Posterior vena cava (tissue), 2 donors: ENCODE measurements at regions of chr12 and their contacts with region 1.

Region 1: GRCh38 chr12:27014085-27014858 is at the start of gene TM7SF3:
- DNase-seq: peak; percentile 97
- total RNA-seq, gene TM7SF3: 33.4 to 43.5 TPM

Region 2: DNA sequence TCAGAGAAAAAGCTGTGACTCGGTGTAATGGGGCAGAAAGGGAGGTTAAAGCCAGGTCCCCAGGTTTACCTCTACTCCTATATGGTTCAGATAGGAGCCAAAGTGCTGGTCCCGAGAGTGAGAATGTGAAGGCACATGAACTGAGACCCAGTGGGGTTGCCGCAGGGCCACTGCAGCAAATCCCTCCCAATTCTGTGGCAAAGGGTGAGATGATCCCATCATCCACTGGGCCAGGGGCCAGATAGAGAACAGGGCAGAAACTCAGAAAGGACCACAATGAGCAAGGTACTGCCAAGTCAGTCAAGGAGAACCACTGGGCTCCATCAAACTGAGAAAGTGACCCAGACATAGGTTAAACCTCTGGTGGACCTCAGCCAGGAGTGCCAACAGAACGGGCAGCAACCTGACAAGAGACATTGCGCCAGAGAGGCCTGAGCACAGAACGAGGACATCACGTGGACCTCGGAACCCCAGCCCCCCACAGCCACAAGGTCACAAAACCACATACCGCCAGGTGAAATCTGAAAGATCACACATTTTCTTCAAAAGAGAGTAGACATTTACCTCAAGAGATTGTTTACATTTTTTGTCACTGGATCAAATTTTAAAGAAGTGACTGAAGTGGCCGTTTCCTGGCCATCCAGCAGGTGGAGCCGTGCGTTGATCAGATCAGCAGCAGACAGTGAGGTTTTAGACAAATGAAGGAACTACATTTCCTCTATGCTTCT is 160.8 kb before region 1 on chr12:
- intact Hi-C with region 1: loop called in 1 of 2 experiments (anchors 10 kb)
- DNase-seq: peak; percentile 86

Region 3: DNA sequence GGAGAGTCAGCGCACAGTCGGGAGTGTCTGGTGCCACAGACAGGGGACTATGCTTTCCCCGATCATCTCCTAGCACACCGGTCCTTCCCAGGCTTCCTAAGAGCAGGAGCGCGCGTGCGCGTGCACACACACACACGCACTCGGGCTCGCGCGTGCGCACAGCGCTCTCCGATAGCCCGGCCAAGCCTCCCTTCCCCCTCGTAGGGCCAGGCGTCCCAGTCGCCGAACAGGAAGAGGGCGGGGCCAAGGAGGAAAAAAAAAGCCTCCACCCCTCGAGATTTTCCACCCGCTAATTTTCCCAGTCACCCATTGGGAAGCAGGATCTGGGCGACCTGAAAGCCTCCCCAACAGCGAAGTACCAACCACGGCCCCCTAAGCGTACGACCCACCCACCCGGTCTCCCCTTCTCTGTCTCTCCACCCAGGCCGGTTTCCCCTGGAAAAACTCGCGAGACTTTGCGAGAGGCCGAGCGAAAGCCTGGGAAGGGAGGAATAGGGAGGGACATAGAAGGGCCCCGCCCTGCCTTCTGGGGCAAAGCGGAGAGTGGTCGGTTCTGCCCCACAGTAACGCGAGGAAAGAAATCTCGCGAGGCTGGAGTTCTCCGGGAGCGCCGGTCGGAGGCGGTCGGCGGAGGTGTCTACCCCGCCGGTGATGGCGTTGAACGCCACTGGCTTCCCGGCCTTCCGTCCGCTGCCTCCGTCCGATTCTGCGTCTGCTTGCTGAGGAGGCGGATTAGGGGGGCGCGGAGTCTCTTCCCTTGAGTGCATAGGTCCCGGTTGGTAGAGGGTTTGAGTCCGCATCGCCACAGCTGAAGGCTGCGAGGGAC is 76.2 kb before region 1 on chr12 and contains the starts of genes FGFR1OP2 and INTS13:
- intact Hi-C with region 1: loop called in 1 of 2 experiments (anchors 5 kb)
- DNase-seq: peak; percentile 100
- total RNA-seq, gene FGFR1OP2: 46.1 to 48.6 TPM
- total RNA-seq, gene INTS13: 15.1 to 23.0 TPM

Region 4: DNA sequence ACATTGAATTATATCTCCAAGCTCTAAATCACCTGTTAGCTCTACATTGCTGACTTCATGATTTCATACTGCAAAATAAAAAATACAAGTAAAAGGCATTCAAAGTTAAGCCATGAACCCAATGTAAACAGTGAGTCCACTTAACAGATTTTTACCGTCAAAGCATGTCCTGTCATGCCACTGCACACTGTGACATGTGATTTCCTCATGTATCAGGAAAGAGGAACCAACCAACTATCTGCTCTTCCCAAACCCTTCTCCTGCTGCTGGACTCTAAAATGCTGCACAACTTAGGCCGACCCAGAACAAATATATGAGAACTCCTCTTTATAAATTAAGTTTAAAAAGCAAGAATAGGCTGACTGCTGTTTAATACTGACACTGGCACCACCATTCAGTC is 37.6 kb before region 1 on chr12:
- intact Hi-C with region 1: no loop called
- DNase-seq: no peak

Region 5: DNA sequence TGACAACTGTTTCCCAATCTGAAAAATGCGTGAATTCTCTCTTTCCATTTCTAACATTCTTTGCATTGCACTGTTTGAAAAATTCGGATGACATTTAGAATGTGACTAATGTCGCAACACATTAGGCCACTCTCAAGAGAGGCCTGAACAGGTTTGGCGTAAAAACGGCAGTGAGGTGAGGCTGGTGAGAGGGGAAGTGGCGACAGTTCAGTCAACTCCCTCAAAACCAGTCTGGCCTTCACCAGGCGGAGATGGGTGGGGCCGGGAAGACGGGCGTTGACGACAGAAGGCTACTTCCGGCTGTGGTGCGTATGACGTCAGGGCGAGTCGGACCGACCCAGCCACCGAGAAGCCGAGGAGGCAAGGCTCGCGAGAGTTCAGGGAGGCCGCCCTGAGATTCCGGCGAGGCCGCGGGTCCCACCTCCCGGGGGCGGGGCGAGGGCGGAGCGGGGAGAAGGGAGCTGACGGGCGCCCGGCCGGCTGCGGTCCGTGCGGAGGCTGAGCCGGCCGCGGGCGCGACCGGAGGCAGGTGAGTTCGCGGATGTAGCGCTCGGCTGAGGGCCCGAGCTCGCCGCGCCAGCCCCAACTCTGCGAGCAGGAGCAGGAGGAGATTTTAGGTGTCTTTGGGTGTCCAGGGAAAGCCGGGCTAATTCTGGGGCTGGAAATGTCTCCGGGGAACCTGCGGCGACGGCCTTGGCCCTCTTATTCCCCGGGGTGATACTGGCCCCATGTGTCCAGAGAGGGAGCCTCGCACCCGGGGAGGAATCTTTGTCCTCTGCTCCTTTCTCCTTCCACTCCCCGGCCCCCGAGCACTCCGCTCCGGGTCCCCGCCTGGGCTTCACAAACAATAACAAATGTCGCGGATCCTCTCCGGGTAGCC is 229.8 kb after region 1 on chr12 and contains the start of gene STK38L:
- intact Hi-C with region 1: loop called in 1 of 2 experiments (anchors 5 kb)
- DNase-seq: peak; percentile 100
- total RNA-seq, gene STK38L: 93.3 to 221 TPM

Region 6: DNA sequence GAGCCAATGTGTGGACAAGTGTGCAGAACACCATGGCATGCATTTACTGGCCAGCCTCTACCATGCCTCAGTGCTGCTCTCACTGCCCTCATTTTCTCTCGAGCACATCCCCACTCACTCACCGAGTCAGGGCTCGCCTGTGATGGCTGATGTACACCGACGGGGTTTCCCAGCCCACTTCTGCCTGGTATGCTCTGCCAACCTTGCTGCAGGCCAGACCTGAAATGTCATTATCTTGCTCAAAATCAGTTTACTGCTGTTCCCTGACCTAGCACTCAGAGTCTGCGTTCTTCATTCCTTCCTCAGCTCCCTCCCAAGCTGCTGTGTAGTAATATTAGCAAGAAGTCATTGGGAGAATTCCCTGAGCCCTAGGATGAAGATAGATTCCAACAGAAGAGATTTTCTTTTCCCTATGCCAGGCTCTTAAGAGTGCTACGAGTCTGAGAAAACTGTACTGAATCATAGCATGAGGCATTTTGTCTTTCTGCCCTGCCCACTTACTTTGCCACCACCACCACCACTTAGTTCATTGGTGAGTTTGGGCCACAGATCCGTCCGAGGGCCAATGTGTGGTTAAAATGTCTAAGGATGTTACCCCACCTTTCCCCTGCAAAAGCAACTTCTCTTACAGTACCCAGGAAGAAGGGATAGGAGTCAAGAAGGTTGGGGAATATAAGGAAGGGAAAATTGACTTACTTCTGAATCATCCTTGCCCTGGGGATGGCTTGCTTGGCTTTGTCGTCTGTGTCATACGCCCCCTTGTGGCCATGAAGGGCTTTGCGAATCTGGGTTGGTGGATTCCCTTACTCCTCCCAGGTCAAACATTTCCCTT is 369.4 kb after region 1 on chr12:
- intact Hi-C with region 1: loop called in 1 of 2 experiments (anchors 10 kb)
- DNase-seq: peak; percentile 94